Common myeloid progenitor, CD34-positive (primary cell): ENCODE measurements at regions of chr4 and their contacts with region 1.

Region 1: DNA sequence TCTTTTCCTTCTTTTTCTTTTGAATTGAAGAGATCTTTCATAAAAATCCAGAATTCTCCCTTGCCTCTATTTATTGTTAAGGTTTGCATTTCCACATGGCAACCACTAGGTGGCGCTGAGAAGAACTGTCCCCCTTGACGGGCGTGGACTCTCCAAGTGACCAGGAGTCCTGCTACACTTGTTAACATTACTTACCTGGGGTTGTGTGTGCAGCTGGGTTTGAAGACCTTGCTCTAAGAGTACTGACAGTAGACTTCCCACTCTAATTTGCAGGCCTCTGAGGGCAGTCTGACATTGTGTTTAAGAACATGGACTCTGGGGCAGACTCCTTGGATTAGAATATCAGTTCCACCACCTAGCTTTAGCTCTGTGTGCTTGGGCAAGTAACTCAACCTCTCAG is 52.8 kb downstream of the GPRIN3 start:
- DNase-seq: peak; percentile 34 to 54 (median 50)
- H3K4me3 ChIP-seq: no peak overlapping the region
- H3K27ac ChIP-seq: no peak overlapping the region
- H3K4me1 ChIP-seq: no peaks in the 10 kb centered on the region
- H3K27me3 ChIP-seq: no peaks in the 10 kb centered on the region

Region 2: DNA sequence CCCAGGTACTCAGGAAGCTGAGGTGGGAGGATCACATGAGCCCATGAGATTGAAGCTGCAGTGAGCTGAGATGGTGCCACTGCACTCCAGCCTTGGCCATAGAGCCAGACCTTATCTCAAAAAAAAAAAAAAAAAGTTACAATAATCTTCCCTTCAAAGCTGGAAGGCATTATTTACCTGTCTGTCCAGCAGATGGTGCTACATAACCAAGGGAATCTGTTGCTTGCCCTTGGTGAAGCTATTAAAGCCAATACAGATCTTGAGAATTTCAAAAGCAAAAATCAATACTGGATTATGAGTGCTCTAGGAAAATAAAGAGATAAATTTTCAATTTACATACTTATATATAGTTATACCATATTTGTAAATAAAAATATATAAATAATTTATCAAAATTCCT is 1221.5 kb before region 1 on chr4:
- CTCF ChIA-PET with region 1: no interaction called
- POLR2A ChIA-PET with region 1: no interaction called
- DNase-seq: peak; percentile 76 to 84 (median 80)
- H3K4me3 ChIP-seq: no peak overlapping the region
- H3K27ac ChIP-seq: no peak overlapping the region
- H3K4me1 ChIP-seq: peaks cover 0 to 7% (median 3%) of the 10 kb centered on the region in 4 experiments
- H3K27me3 ChIP-seq: no peaks in the 10 kb centered on the region

Region 3: GRCh38 chr4:89242864-89243732 is 11.7 kb before region 1 on chr4:
- CTCF ChIA-PET with region 1: interaction called, 10 read pairs
- POLR2A ChIA-PET with region 1: no interaction called
- DNase-seq: peak; percentile 48 to 93 (median 90)
- H3K4me3 ChIP-seq: peak overlapping the region in 1 of 7 experiments; percentile 14
- H3K27ac ChIP-seq: peak overlapping the region; percentile 80 to 87
- H3K4me1 ChIP-seq: peaks cover 4 to 15% (median 10%) of the 10 kb centered on the region in 4 experiments
- H3K27me3 ChIP-seq: no peaks in the 10 kb centered on the region

Region 4: GRCh38 chr4:89434364-89434988 is 179.6 kb after region 1 on chr4:
- CTCF ChIA-PET with region 1: interaction called, 16 read pairs
- POLR2A ChIA-PET with region 1: no interaction called
- DNase-seq: peak; percentile 34 to 68 (median 63)
- H3K4me3 ChIP-seq: no peak overlapping the region
- H3K27ac ChIP-seq: no peak overlapping the region
- H3K4me1 ChIP-seq: peaks cover 0 to 12% (median 6%) of the 10 kb centered on the region in 4 experiments
- H3K27me3 ChIP-seq: no peaks in the 10 kb centered on the region